Activated B cell treated with CpG ODN at 0.5 μM for 24 hours (primary cell): ENCODE measurements at regions of chr15 and their contacts with region 1.

Region 1: DNA sequence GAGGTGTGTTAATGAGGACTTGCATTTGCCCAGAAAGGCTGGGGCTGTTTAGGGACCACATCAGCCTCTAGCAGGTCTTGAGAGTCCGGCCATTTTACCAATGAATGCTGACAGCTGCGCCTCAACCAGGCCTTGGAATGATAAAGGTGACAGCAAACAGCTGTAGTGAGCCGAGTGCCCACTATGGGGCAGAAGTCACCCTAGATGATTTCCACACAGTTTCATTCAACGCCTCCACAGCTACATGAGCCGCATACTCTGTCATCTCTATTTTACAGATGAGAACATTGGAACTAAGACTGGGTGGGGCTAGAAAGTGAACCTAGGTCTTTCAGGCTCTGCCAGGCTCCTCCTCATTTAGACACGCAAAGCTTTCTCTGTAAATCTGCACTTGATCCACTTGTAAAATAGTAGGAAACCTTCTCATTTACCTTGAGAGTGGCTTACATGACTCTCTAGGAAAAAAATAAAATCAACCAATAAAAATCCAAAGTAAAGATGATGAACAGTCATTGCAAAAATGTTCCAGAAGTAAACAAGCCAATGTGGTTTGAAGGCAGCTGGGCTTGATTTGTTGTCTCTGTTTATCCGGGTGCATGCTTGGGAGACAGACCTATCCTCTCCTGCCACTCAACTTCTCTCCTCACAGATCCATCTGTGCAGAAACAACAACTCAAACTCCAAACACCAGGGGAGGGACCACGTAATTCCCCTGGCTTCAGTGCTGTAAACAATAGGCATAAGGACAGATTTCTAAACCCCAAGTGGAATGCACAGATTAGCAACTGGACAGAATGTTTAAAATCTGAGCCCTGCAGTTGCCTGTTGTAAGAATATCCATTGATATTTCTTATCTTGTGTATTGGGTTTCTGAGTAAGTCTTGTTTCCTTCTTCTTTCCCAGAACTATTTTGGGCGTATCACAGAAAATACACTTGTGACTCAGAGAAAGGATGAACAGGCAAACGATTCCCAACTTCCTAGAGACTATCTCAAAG is 31.5 kb upstream of the LDHAL6B start:
- DNase-seq: no peak
- ATAC-seq: peak; percentile 99
- H3K4me3 Mint-ChIP-seq: no peak overlapping the region
- H3K27ac Mint-ChIP-seq: peak overlapping the region; percentile 20
- H3K4me1 Mint-ChIP-seq: peaks cover 15% of the 10 kb centered on the region
- H3K27me3 Mint-ChIP-seq: no peaks in the 10 kb centered on the region
- CTCF ChIP-seq: no peak

Region 2: DNA sequence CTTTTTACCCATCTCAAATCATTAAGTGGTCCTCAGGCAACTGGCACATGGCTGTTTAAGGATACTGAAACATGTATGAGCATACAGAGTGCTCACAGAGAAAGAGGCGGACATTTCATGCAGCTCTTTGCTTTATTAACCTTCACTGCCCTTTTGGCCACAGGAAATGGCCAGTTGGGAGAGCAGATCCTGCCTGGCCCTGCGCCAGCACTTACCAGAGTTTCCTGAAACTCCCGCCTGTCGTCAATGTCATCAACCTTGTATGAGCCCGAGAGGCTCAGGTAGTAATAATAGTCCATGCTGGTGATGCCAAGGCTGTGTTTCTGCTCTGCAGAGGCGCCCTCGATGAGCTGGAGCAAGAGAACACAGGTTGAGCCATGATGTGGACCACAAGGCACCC is 49.3 kb after region 1 on chr15:
- CTCF ChIA-PET with region 1: no interaction called
- POLR2A ChIA-PET with region 1: no interaction called
- intact Hi-C with region 1: no loop called
- DNase-seq: no peak
- ATAC-seq: no peak
- H3K4me3 Mint-ChIP-seq: no peak overlapping the region
- H3K27ac Mint-ChIP-seq: no peak overlapping the region
- H3K4me1 Mint-ChIP-seq: no peaks in the 10 kb centered on the region
- H3K27me3 Mint-ChIP-seq: no peaks in the 10 kb centered on the region
- CTCF ChIP-seq: no peak

Region 3: DNA sequence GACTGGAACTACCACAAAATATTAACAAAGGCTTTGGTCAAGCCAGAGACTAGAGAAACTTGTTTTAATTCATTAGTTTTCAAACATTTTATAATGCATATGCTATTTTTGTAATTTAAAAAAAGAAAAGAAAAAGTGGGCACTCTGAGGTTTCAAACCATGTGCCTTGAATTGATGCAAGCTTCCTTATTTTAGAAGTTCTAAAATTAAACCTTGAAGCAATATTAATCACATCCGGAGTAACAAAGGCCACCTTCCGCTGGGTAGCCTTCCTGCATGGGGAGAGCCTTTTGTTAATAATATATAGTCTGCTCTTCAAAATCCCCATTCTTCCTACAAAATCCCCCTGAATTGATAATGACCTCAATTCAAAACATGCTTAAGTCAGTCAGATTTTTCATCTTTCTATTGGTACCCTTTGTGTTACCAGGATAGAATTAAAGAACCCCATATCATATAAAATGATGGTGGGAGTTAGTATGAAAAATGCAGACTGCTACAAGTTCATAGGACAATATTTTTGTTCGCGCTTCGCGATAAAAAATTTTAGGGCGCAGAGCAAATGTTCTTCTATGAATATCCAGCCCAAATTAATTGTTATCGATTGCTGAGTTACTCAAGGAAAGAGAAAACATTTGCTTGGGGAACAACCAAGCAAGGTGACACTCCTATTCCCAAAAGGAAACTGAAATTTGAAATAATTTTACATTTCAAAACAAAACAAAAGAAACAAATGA is 62.2 kb after region 1 on chr15:
- CTCF ChIA-PET with region 1: no interaction called
- POLR2A ChIA-PET with region 1: no interaction called
- intact Hi-C with region 1: loop called (anchors 5 kb)
- DNase-seq: no peak
- ATAC-seq: peak; percentile 84
- H3K4me3 Mint-ChIP-seq: peak overlapping the region; percentile 48
- H3K27ac Mint-ChIP-seq: peak overlapping the region; percentile 88
- H3K4me1 Mint-ChIP-seq: peaks cover 46% of the 10 kb centered on the region
- H3K27me3 Mint-ChIP-seq: no peaks in the 10 kb centered on the region
- CTCF ChIP-seq: no peak

Region 4: DNA sequence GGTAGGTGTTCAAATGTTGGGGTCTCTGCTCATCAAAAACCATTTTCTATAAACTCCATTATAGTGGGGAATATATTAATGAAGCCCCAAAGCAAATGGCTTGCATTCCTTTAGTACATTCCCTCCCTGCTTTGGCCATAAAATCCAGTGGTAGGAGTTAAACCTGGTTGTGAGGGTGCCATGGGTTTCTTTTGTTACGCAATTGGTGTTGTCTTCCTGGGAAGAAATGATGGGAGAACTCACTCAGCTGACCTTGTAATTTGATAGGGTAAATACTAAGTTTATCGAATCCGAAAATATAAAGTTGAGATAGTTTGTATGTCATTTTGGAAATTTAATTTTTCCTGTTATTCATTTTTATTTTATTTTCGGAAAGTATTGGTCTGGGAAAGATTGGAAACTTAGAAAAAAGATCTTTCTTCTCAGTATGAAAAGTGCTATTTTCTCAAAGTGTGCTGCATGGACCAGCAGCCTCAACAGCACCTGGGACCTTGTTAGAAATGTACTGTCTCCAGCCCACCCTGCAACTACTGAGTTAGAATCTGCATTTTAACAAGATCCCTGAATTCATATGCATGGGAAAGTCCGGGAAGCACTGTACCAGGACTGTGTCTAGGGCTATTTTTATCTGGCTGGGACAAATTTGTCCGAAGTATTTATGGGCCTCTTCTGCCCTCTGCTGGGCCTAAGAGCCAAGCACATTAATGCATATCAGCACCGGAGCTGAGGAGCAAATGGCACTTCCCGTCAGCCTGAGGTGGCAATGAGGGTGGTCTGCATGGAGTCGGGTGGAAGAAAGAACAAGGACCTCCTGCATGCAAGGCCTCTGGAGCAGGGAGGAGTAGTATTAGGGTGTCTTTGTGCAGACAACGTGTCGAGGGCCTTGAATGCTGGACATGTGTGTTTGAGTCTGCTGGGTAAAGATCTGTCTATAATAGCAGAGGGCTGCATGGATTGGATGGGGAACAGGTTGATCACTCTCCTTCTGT is 317.6 kb after region 1 on chr15:
- CTCF ChIA-PET with region 1: interaction called, 29 read pairs
- POLR2A ChIA-PET with region 1: interaction called, 6 read pairs
- intact Hi-C with region 1: loop called (anchors 1 kb)
- DNase-seq: peak; percentile 31
- ATAC-seq: peak; percentile 93
- H3K4me3 Mint-ChIP-seq: no peak overlapping the region
- H3K27ac Mint-ChIP-seq: peak overlapping the region; percentile 1
- H3K4me1 Mint-ChIP-seq: peaks cover 10% of the 10 kb centered on the region
- H3K27me3 Mint-ChIP-seq: no peaks in the 10 kb centered on the region
- CTCF ChIP-seq: peak; percentile 87

Region 5: GRCh38 chr15:59501597-59501996 is 326.5 kb after region 1 on chr15:
- CTCF ChIA-PET with region 1: interaction called, 12 read pairs
- POLR2A ChIA-PET with region 1: no interaction called
- intact Hi-C with region 1: no loop called
- DNase-seq: no peak
- ATAC-seq: peak; percentile 67
- H3K4me3 Mint-ChIP-seq: no peak overlapping the region
- H3K27ac Mint-ChIP-seq: no peak overlapping the region
- H3K4me1 Mint-ChIP-seq: no peaks in the 10 kb centered on the region
- H3K27me3 Mint-ChIP-seq: no peaks in the 10 kb centered on the region
- CTCF ChIP-seq: peak; percentile 24